Activated T-helper 2 cell treated with anti-CD3 and anti-CD28 coated beads, Interferon-gamma antibody, Interleukin-2, Interleukin-4, amounts not matched to agents 10 μg/mL and 5 μg/mL and 100 μg/mL, durations not matched to agents 14 hours and 24 hours and 36 hours (primary cell): ENCODE measurements at regions of chr9 and their contacts with region 1.

Region 1: DNA sequence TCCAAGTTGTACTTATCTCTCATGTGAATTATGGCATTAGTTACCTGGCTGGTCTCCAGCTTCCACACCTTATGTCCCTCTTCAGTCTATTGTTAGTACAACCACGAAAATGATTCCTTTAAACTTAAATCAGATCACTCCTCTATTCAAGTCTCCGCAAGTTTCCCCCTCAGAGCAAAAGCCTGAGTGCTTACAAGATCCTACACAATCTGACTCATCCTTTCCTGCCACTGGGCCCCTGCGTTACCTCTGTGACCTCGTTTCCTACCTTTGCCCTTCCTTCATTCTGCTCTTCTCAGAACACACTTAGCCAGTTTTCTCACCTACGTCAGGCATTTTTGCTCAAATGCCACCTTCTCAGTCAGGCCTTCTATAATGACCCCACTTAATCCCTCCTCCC is 45.1 kb upstream of the GLIS3 start:
- DNase-seq: no peak
- H3K4me3 Mint-ChIP-seq: no peak overlapping the region
- H3K27ac Mint-ChIP-seq: no peak overlapping the region
- H3K4me1 Mint-ChIP-seq: peaks cover 14% of the 10 kb centered on the region
- H3K27me3 Mint-ChIP-seq: no peaks in the 10 kb centered on the region

Region 2: DNA sequence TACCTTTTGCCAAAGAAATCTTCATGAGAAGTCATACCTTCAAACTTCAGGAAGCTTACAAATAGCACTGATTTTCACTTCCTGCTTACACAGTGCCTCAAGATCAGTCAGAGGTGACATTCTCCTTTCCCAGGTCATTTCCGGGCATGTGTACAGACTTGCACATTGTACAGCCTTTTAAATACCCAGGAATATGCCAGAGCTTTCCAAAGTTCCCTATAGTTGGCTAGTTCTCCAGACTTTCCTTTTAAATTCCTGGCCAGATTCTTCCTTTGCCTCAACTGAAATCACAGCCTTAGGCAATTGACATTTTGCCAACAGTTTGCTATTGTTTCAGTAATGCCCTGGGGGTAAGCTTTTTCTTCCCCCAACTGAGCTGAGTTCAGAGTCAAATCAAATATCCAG is 866.4 kb before region 1 on chr9:
- intact Hi-C with region 1: loop called (anchors 10 kb)
- DNase-seq: no peak
- H3K4me3 Mint-ChIP-seq: peak overlapping the region; percentile 79
- H3K27ac Mint-ChIP-seq: peak overlapping the region; percentile 90
- H3K4me1 Mint-ChIP-seq: peaks cover 61% of the 10 kb centered on the region
- H3K27me3 Mint-ChIP-seq: no peaks in the 10 kb centered on the region

Region 3: GRCh38 chr9:4099976-4100735 is 244.8 kb before region 1 on chr9:
- intact Hi-C with region 1: no loop called
- DNase-seq: no peak
- H3K4me3 Mint-ChIP-seq: no peak overlapping the region
- H3K27ac Mint-ChIP-seq: peak overlapping the region; percentile 26
- H3K4me1 Mint-ChIP-seq: peaks cover 27% of the 10 kb centered on the region
- H3K27me3 Mint-ChIP-seq: no peaks in the 10 kb centered on the region

Region 4: DNA sequence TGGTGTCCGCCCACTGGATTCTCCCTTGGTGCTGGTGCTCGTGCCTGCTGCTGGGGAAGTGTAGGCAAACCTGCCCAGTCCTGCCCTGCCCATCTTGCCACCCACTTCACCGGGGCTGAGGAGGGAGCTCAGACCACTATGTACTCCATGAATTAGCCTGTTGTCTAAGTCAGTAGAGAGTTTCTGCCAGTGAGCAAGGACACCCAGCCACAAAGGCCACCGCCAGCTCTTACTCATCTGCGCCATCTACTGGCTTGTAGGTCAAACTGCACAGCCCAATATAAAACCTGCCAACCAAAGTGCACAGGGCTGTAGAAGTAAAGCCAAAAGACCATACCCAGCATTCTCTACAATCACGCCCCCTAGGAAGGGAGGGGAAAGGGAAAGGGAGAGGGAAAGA is 147.4 kb before region 1 on chr9:
- intact Hi-C with region 1: no loop called
- DNase-seq: no peak
- H3K4me3 Mint-ChIP-seq: no peak overlapping the region
- H3K27ac Mint-ChIP-seq: no peak overlapping the region
- H3K4me1 Mint-ChIP-seq: no peaks in the 10 kb centered on the region
- H3K27me3 Mint-ChIP-seq: peaks cover 3% of the 10 kb centered on the region

Region 5: GRCh38 chr9:4327504-4328191 is 17.3 kb before region 1 on chr9:
- intact Hi-C with region 1: no loop called
- DNase-seq: no peak
- H3K4me3 Mint-ChIP-seq: no peak overlapping the region
- H3K27ac Mint-ChIP-seq: no peak overlapping the region
- H3K4me1 Mint-ChIP-seq: no peaks in the 10 kb centered on the region
- H3K27me3 Mint-ChIP-seq: peaks cover 3% of the 10 kb centered on the region